Tibial artery (tissue), 4 donors: ENCODE measurements at regions of chr3 and their contacts with region 1.

Region 1: GRCh38 chr3:24336101-24336500 is 158.5 kb downstream of the THRB start:
- DNase-seq: no peak
- H3K4me3 ChIP-seq: no peak overlapping the region
- H3K27ac ChIP-seq: peak overlapping the region in 1 of 2 donors; percentile 14
- H3K4me1 ChIP-seq: peaks cover 0 to 59% (median 24%) of the 10 kb centered on the region in 4 donors
- H3K27me3 ChIP-seq: no peaks in the 10 kb centered on the region
- CTCF ChIP-seq: no peak

Region 2: GRCh38 chr3:24196526-24196925 is 139.6 kb before region 1 on chr3:
- intact Hi-C with region 1: no loop called
- DNase-seq: no peak
- H3K4me3 ChIP-seq: no peak overlapping the region
- H3K27ac ChIP-seq: no peak overlapping the region
- H3K4me1 ChIP-seq: peaks cover 0 to 38% (median 11%) of the 10 kb centered on the region in 4 donors
- H3K27me3 ChIP-seq: no peaks in the 10 kb centered on the region
- CTCF ChIP-seq: no peak

Region 3: GRCh38 chr3:24299806-24300626 is 36.1 kb before region 1 on chr3:
- intact Hi-C with region 1: loop called (anchors 2 kb)
- DNase-seq: no peak
- H3K4me3 ChIP-seq: no peak overlapping the region
- H3K27ac ChIP-seq: no peak overlapping the region
- H3K4me1 ChIP-seq: peaks cover 3 to 38% (median 6%) of the 10 kb centered on the region in 4 donors
- H3K27me3 ChIP-seq: no peaks in the 10 kb centered on the region
- CTCF ChIP-seq: no peak

Region 4: DNA sequence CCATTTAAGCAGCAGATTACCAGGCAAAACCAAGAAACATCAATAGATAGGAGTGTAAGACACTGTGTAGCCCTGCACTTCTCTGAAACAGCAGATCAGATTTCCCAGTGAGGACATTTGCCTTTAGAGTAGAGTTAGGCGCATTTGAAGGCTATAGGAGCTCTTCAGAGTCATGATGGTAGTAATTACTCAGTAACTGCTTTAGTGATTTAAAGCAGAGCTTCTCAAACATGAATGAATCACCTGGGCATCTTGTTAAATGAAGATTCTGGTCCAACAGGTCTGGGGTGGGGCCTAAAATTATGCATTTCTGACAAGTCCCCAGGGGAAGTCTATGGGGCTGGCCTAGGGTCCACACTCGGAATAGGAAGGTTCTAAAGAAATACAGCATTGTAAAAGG is 121.6 kb after region 1 on chr3:
- intact Hi-C with region 1: no loop called
- DNase-seq: no peak
- H3K4me3 ChIP-seq: no peak overlapping the region
- H3K27ac ChIP-seq: peak overlapping the region in 1 of 2 donors; percentile 36
- H3K4me1 ChIP-seq: peaks cover 0 to 62% (median 14%) of the 10 kb centered on the region in 4 donors
- H3K27me3 ChIP-seq: no peaks in the 10 kb centered on the region
- CTCF ChIP-seq: no peak